RWPE1 (cell line): ENCODE measurements at regions of chr17 and their contacts with region 1.

Region 1: DNA sequence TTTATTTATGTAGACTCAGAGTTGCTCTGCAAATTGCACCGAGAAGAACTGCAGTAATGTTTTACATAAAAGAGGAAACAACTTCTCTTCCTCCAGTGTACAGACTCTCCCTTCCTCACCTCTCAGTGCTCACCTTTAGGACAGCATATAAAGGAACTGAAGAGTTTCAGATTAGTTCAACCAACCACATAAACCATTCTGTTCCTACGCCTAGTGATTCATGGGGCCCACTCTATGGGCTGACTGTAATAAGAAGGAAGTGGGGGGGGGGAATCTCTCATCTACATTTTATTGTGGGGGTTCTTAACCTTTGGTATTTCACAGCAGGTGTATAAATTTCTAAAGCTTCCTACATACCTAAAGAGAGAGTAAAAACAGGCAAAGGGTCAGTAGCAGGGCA is 18.3 kb downstream of the ZSWIM7 start:
- DNase-seq: no peak
- H3K27ac ChIP-seq: peak overlapping the region; percentile 61
- CTCF ChIP-seq: no peak

Region 2: GRCh38 chr17:16013943-16014407 is 32.8 kb after region 1 on chr17:
- CTCF ChIA-PET with region 1: no interaction called
- POLR2A ChIA-PET with region 1: no interaction called
- DNase-seq: peak; percentile 64
- H3K27ac ChIP-seq: no peak overlapping the region
- CTCF ChIP-seq: peak; percentile 52

Region 3: DNA sequence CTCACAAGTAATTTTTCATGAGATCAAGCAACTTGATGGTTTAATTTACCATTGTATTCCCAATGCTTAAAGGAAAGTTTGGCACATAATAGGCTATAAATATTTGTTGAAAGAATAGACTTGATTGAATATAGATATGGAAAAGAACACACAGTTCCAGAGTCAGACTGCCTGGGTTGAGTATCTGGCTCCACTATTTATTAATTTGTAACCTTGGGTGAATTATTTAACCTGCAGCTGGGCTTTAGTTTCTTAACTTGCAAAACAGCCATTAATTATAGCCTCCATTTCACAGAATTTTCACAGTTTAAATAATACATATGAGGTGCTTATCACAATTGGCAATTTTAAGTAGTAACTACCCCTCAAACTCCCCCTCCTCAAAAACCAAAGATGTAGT is 160.5 kb after region 1 on chr17:
- CTCF ChIA-PET with region 1: no interaction called
- POLR2A ChIA-PET with region 1: interaction called, 10 read pairs
- DNase-seq: no peak
- H3K27ac ChIP-seq: no peak overlapping the region
- CTCF ChIP-seq: no peak